ENCODE measurements at regions of chr2 and their contacts with region 1.

Region 1: DNA sequence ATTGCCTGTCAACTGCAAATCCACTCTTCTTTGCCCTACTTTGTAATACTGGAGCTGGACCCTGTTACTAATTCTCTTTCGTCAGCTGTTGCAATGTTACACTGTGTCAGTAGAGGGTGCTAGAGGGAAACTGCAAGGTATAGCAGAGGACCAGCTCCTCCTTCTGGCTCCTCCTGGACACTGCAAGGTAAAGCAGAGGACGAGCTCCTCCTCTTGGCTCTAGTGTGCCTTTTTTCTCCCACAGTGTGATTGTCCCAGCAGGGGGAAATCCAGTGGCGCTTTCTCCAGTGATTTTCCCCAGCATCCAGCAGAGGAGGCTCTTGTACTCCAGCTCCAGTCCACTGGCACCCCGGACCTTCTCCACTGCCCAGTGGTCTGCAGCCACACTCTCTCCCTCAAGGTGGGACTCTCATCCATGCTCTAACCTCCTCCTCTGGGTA is 95.6 kb downstream of the CAPN13 start:
- DNase-seq: peak; percentile 94
- ATAC-seq: peak; percentile 84
- H3K4me3 Mint-ChIP-seq: no peak overlapping the region
- H3K27ac Mint-ChIP-seq: no peak overlapping the region
- H3K4me1 Mint-ChIP-seq: no peaks in the 10 kb centered on the region
- H3K27me3 Mint-ChIP-seq: no peaks in the 10 kb centered on the region; the same call in 1 of the 2 replicates
- CTCF ChIP-seq: peak; percentile 98

Region 2: GRCh38 chr2:30146438-30147147 is 565.1 kb before region 1 on chr2 and contains the start of gene YPEL5:
- CTCF ChIA-PET with region 1: interaction called, 17 read pairs
- POLR2A ChIA-PET with region 1: no interaction called
- DNase-seq: peak; percentile 99
- ATAC-seq: peak; percentile 96
- H3K4me3 Mint-ChIP-seq: peak within 1 kb of the TSS; percentile 86
- H3K27ac Mint-ChIP-seq: peak within 1 kb of the TSS; percentile 92
- H3K4me1 Mint-ChIP-seq: peaks cover 41% of the 10 kb centered on the region
- H3K27me3 Mint-ChIP-seq: peaks cover 13% of the 10 kb centered on the region
- CTCF ChIP-seq: no peak
- total RNA-seq, gene YPEL5: 25.3 to 27.3 TPM (median 26.5 TPM) in 3 replicates

Region 3: DNA sequence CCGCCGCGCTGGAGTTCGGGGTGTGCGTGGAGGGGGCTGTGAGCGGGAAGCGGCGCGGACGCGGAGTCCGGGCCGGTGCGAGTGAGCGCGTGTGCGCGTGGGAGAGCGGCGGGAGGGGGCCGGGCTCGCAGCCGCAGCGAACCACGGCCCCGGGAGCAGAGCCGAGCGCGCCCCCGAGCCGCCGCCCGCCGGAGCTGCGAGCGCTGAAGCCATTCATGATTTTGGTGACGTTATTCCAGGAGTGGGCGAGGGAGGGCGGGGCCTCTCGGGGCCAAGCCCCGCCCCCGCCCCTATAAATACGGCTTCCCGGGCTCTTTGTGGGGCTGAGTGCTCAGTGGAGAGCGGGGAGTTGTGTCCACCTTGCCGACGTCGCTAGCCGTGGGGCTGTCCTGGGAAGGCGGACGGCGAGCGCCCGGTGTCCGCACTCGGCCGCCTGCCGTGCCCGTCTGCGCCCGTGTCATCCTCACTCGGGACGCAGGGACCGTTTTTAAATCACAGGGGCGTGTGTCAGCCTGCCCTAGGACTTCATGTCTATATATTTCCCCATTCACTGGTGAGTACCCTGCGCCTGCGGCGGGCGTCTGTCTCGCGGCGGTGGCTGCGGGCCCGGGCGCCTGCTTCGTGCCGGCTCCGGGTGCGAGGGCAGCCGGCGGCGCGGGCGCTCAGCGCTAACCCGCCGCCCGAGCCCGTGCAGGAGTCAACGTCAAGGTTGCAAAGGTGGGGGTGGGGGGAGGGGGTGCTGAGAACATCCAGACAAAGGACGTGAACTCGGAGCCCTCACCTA is 480.3 kb before region 1 on chr2 and contains the start of gene LBH:
- CTCF ChIA-PET with region 1: interaction called, 18 read pairs
- POLR2A ChIA-PET with region 1: no interaction called
- DNase-seq: peak; percentile 65
- ATAC-seq: peak; percentile 52
- H3K4me3 Mint-ChIP-seq: peak within 1 kb of the TSS; percentile 83
- H3K27ac Mint-ChIP-seq: no peak within 1 kb of the TSS
- H3K4me1 Mint-ChIP-seq: peaks cover 31% of the 10 kb centered on the region
- H3K27me3 Mint-ChIP-seq: peaks cover 39% of the 10 kb centered on the region
- CTCF ChIP-seq: no peak
- total RNA-seq, gene LBH: 30.8 to 47.3 TPM (median 34.7 TPM) in 3 replicates

Region 4: DNA sequence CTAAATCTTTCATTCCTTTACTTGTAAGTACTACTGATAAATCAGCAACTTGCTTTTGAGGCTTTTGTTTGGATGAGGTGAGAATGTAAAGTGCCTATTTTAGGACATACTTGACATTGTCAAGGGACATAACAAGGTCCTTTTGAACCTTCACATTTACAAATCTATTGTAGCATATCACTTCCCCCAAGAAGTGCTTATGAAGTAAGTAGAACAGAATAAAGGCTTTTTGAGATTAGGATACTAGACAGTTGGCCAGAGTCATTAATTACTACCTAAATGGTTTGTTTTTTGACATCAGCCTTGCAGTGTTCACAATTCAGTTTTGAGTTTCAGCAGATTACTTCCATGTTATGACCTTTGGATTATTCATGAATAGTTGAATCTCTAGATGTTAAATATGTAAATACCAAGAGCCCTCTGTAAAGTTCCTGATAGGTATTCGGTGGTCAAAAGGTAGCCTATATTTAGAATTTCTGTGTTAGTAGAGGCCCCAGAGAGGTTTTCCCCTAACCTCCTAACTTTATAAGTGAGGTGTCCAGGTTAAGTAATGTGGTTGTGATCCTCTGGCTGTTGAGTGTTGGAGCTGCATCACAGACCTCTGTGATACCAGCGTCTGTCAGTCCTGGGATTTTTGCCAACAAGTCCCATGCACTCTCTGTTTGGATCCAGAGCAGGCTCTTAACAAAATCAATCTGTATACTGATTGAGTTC is 197.4 kb before region 1 on chr2:
- CTCF ChIA-PET with region 1: no interaction called
- POLR2A ChIA-PET with region 1: no interaction called
- DNase-seq: no peak
- ATAC-seq: no peak
- H3K4me3 Mint-ChIP-seq: no peak overlapping the region
- H3K27ac Mint-ChIP-seq: no peak overlapping the region
- H3K4me1 Mint-ChIP-seq: peaks cover 48% of the 10 kb centered on the region
- H3K27me3 Mint-ChIP-seq: no peaks in the 10 kb centered on the region
- CTCF ChIP-seq: no peak

Region 5: DNA sequence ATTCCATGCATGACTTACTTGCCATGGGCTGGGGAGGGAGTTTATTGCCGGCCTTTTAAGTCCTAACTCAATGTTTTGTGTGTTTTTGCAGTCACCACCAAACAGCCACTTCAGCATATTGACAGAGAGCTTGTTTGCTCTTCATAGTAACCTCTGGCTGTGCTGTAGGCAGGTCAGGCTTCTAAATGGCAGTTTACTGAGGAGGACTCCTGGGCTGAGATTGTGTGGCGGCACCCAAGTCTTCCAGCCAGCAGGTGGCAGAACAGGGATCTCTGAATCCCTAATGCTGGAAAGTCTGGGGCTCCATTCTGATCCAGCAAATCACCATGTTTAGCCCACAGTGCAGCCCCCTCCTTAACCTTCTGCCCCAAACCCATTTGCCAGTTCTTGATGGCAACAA is 25.7 kb before region 1 on chr2:
- CTCF ChIA-PET with region 1: interaction called, 55 read pairs
- POLR2A ChIA-PET with region 1: no interaction called
- DNase-seq: peak; percentile 54
- ATAC-seq: peak; percentile 88
- H3K4me3 Mint-ChIP-seq: no peak overlapping the region
- H3K27ac Mint-ChIP-seq: no peak overlapping the region
- H3K4me1 Mint-ChIP-seq: peaks cover 16% of the 10 kb centered on the region
- H3K27me3 Mint-ChIP-seq: no peaks in the 10 kb centered on the region
- CTCF ChIP-seq: no peak

Region 6: DNA sequence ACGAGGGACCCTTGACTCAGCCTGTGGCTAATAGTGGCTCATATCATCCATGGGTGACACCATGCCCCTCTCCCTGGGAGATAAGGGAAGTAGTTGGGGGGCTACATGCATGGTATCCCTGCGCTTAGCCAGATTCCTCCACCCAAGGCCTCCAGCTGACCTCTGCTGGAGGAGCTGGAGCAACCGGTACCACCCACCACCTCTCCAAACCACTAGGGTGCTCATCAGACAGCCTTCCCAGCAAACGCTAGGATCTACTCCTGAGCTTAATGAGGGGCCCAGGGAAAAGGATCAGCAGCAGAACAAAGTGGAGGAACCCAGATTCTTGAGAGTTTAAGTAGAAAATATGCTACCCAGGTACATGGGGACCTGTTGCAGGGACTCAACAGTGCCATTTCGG is 171.5 kb after region 1 on chr2:
- CTCF ChIA-PET with region 1: interaction called, 21 read pairs
- POLR2A ChIA-PET with region 1: no interaction called
- DNase-seq: no peak
- ATAC-seq: peak; percentile 38
- H3K4me3 Mint-ChIP-seq: no peak overlapping the region
- H3K27ac Mint-ChIP-seq: no peak overlapping the region
- H3K4me1 Mint-ChIP-seq: peaks cover 40% of the 10 kb centered on the region
- H3K27me3 Mint-ChIP-seq: peaks cover 8% of the 10 kb centered on the region
- CTCF ChIP-seq: no peak

Region 7: DNA sequence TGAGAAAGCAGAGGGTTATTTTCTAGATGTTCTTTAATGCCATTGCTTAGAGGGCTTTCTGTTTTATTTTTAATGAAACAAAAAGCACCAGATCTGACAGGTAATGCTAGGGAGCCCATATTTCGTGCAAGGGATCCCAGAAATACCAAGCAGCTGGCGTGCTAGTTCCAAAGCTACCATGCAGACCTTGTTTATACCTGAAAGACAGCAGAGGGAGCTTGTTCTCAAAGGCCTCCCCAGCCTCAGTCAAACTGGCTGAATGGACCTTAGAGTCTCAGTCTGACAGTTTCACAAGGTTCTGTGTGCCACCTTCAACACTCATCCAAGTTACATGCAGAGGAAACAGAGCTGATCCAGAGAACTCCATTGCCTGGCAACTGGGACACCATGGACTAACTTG is 378.0 kb after region 1 on chr2:
- CTCF ChIA-PET with region 1: interaction called, 11 read pairs
- POLR2A ChIA-PET with region 1: no interaction called
- DNase-seq: no peak
- ATAC-seq: peak; percentile 51; the same call in 1 of the 2 replicates
- H3K4me3 Mint-ChIP-seq: no peak overlapping the region
- H3K27ac Mint-ChIP-seq: no peak overlapping the region
- H3K4me1 Mint-ChIP-seq: no peaks in the 10 kb centered on the region
- H3K27me3 Mint-ChIP-seq: no peaks in the 10 kb centered on the region; the same call in 1 of the 2 replicates
- CTCF ChIP-seq: no peak

Region 8: GRCh38 chr2:31333527-31334183 is 622.0 kb after region 1 on chr2:
- CTCF ChIA-PET with region 1: interaction called, 22 read pairs
- POLR2A ChIA-PET with region 1: no interaction called
- DNase-seq: peak; percentile 93
- ATAC-seq: peak; percentile 93
- H3K4me3 Mint-ChIP-seq: no peak overlapping the region
- H3K27ac Mint-ChIP-seq: peak overlapping the region; percentile 87; the same call in 1 of the 2 replicates
- H3K4me1 Mint-ChIP-seq: peaks cover 26% of the 10 kb centered on the region
- H3K27me3 Mint-ChIP-seq: no peaks in the 10 kb centered on the region
- CTCF ChIP-seq: peak; percentile 87